ENCODE measurements at regions of chr22 and their contacts with region 1.

Region 1: DNA sequence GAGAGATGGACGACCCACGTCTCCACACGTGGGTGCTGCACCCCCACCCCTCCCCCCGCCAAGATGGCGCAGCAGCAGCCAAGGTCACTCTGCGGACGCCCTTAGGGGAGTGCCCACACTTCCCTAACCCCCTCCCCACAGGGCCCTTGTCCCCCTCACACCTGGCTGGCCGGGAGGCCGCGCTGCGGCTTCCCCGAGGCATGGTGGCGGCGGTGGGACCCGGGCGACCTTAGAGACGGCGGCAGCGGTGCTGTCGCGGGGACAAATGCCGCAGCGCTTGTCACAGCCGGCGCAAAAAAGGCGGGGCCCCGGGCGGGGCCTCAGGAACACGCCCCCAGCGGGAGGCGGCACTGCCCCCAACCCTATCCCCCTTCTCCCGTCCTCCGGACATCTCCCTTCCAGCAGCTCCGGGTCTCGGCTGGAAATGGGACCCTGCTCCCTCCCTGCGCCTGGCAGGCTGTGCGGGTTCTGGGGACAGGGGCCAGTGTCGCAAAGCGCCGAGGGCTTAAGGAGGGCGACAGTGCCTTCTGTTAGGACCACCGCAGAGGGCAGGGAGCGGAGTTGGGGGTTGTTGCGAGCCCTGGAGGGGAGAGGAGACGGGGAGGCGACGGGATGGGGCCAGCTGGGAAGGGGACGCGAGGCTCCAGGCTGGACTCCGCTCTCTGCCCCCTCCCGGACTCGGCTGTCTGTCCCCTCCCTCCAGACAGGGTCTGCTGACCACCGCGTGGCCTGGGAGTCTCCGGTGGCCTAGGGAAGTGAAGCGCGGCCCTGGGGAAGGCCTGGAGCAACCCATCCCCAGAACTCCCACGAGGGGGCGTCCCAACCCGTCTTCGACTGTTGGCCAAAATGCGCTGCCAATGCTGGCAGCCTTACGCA is at the start of gene CHCHD10:
- DNase-seq: peak; percentile 95
- total RNA-seq, gene CHCHD10: 59.0 to 68.7 TPM

Region 2: DNA sequence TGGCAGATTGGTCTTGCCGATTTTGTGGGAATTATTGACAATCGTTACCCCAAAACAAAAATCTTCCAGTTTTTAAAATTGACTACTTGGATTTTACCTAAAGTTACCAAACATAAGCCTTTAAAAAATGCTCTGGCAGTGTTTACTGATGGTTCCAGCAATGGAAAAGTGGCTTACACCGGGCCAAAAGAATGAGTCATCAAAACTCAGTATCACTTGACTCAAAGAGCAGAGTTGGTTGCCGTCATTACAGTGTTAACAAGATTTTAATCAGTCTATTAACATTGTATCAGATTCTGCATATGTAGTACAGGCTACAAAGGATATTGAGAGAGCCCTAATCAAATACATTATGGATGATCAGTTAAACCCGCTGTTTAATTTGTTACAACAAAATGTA is 225.0 kb before region 1 on chr22:
- intact Hi-C with region 1: loop called in 1 of 2 experiments (anchors 10 kb)
- DNase-seq: no peak

Region 3: GRCh38 chr22:23838681-23839468 is 71.0 kb after region 1 on chr22 and contains the start of gene DERL3:
- intact Hi-C with region 1: loop called in 1 of 2 experiments (anchors 5 kb)
- DNase-seq: peak; percentile 99
- total RNA-seq, gene DERL3: 0.83 to 0.95 TPM

Region 4: DNA sequence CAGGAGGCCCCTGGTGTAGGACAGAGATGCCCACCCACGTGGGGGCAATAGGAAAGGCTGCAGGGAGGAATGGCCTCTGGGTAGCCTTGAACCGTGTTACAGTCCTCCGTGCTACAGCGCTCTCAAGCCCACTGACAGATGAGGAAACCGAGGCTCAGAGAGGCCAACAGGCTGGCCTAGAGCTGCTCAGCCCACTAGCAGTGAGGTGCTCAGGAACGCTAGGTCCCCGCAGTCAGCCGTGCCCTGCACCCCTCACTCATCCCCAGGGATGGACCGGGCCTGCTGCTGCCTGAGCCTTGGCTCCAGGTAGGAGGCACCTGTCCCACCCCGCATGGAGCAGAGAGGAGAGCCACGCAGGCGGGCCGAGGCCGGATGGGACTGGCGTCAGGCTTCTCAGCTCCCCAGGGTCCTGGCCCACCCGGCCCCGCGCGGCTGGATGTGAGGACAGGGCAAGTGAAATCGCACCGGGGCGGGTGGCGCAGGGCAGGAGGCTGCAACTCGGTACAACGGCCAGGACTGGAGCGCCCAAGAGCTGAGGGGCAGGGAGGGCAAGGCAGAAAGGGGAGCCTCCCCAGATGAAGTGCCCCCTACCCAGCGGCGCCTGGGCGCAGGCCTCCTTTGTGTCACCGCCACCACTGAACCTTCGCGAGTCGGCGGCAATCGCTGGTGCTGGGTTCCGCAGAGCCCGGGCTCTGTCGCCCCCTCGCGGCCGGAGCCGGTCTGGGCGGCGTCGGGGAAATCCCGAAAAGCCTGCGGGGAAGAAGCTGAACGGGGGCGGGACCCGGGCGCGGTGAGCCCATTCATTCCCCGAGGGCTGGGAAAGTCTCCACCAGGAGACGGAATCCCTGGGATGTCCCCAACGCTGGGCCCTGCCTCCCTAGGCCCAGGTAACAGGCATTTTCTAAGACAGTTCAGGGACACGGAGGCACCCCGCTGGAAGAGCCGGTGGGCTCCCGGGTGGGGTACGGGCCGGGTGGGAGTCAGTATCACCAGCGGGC is 81.4 kb after region 1 on chr22:
- intact Hi-C with region 1: loop called in 1 of 2 experiments (anchors 5 kb)
- DNase-seq: peak; percentile 95